ENCODE measurements at regions of chr18 and their contacts with region 1.

Region 1: DNA sequence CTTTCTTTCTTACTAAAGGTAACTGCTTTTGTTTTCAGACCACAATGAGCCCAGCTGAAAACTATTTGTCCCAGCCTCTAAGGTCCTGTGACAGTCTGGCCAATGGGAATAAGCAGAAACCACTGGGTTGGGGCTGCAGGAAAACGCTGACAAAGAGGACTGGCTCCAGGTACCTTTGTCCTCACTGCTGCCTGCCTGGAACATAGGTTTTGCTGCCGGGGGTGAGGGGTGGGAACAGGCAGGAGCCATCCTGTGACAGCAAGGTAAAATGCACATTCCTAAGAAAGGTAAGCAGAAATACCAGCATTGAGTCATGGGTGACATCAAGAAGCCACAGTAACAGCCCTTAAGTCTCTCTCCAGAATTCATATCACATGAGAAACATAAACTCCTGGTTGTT is 21.6 kb downstream of the PTPN2 start:
- DNase-seq: peak; percentile 37
- H3K4me3 ChIP-seq: peak overlapping the region; percentile 52
- H3K27ac ChIP-seq: peak overlapping the region; percentile 89
- H3K4me1 ChIP-seq: peaks cover 83% of the 10 kb centered on the region
- CTCF ChIP-seq: no peak

Region 2: DNA sequence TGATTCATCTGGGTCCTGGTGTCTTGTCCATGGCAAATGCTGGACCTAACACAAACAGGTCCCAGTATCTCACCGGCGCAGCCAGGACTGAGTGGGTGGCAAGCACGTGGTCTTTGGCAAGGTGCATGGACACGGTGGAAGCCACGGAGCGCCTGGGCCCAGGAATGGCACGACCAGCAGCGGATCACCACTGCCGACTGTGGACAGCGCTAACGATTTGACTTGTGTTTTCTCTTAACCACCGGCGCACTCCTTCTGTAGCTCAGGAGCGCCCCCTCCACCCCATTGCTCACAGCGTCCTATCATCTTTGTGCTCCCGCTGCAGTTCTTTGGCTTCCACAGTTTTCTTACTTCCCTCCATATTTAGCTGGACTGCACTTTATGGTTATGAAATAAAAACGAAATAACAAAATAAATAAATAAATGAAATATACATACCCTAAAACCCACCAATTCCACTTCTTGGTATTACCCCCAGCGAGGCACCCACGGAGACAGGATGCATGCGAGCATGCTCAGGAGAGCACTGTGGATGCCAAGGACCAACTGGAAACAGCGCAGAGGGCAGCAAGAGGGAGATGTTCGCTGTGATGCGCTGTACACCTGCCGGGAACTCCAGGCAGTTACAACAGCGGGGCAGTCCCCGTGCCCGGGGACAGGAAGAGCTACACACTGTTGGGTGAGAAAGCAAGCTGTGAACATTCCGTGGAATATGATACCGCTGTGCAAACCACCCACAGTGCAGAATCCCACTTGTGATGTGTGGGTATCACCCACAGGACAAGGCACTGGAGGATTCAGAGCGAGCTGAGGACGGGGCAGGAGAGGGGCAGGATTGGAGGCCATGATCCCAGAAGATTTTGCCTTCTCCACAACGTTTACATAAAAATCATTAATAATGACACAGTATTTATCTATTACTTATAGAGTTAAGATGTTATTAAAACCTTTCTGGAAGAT is 615.3 kb before region 1 on chr18:
- CTCF ChIA-PET with region 1: no interaction called
- POLR2A ChIA-PET with region 1: no interaction called
- intact Hi-C with region 1: no loop called
- DNase-seq: no peak
- H3K4me3 ChIP-seq: no peak overlapping the region
- H3K27ac ChIP-seq: no peak overlapping the region
- H3K4me1 ChIP-seq: no peaks in the 10 kb centered on the region
- CTCF ChIP-seq: peak; percentile 49

Region 3: DNA sequence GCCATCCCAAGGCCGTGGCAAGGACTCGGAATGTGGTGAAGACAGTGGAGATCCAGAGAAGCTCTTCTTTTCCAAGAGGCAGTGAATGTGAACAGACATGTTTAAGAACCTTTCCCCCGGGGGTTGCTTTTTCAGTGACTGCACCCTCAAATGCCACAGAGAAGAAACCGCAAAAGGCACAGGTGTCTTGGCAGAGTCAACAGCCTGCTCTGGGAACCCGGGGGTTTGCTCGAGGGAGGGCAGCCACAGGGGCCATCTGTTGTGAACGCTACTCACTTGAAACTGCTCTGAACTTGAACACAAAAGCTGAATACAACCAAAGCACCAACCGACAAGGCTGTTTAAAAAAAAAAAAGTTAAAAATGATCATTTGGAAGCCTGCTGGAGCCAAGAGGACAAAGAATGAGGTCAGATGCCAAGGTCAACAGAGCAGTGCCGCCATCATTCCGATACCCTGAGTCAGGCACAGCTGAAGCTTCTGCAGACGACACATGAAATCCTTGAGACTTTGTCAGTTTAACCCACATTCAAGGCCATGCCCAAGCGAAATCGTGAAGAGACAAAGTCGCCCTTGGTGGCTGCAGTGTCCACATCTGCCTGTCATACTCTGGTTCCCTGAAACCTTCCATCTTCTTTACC is 112.3 kb before region 1 on chr18:
- CTCF ChIA-PET with region 1: no interaction called
- POLR2A ChIA-PET with region 1: no interaction called
- intact Hi-C with region 1: loop called (anchors 1 kb)
- DNase-seq: peak; percentile 95
- H3K4me3 ChIP-seq: peak overlapping the region; percentile 15
- H3K27ac ChIP-seq: peak overlapping the region; percentile 62
- H3K4me1 ChIP-seq: peaks cover 40% of the 10 kb centered on the region
- CTCF ChIP-seq: no peak

Region 4: DNA sequence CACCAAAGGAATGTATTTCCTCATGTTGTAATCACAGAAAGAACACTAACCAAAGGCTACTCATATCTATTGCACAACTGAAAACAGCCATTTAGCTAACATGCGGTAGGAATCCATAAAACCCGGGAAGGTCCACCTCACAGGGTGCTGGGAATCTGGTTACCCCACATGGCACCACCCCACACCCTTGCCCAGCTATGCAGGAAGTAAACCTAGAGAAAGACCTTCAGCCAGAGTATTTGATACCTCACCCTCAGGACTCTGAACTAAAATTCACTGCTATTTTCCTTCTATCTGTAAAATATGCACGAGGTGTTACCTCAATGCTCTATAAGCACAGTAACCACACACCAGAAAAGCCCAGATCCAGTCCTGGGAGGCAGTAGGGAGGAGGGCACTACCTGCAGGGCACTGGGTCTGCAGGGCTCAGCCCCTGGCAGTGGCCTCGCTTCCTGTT is 24.3 kb before region 1 on chr18:
- CTCF ChIA-PET with region 1: no interaction called
- POLR2A ChIA-PET with region 1: interaction called, 3 read pairs
- intact Hi-C with region 1: loop called (anchors 1 kb)
- DNase-seq: peak; percentile 31
- H3K4me3 ChIP-seq: peak overlapping the region; percentile 46
- H3K27ac ChIP-seq: peak overlapping the region; percentile 18
- H3K4me1 ChIP-seq: peaks cover 39% of the 10 kb centered on the region
- CTCF ChIP-seq: no peak

Region 5: DNA sequence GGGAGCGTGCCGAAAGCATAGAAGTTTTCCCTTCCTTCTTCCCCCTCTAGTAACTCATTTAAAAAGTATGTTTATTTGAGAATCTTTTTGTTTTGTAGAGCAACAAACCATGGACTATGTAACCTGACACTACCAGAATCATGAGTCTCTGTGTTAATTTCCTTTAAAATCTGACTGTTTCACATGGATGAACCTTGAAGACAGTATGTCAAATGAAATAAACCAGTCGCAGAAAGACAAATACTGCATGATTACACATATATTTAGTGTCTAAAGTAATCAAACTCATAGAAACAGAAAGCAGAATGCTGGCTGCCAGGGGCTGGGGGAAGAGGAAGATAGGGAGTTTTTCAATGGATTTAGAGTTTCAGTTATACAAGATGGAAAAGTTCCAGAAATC is 10.8 kb before region 1 on chr18:
- CTCF ChIA-PET with region 1: no interaction called
- POLR2A ChIA-PET with region 1: interaction called, 11 read pairs
- intact Hi-C with region 1: no loop called
- DNase-seq: no peak
- H3K4me3 ChIP-seq: no peak overlapping the region
- H3K27ac ChIP-seq: no peak overlapping the region
- H3K4me1 ChIP-seq: peaks cover 34% of the 10 kb centered on the region
- CTCF ChIP-seq: no peak

Region 6: GRCh38 chr18:12883684-12884405 is 21.4 kb after region 1 on chr18 and contains the start of gene PTPN2:
- CTCF ChIA-PET with region 1: interaction called, 3 read pairs
- POLR2A ChIA-PET with region 1: interaction called, 52 read pairs
- intact Hi-C with region 1: loop called (anchors 2 kb)
- DNase-seq: peak; percentile 95
- H3K4me3 ChIP-seq: peak within 1 kb of the TSS; percentile 78
- H3K27ac ChIP-seq: peak within 1 kb of the TSS; percentile 86
- H3K4me1 ChIP-seq: peaks cover 61% of the 10 kb centered on the region
- CTCF ChIP-seq: no peak
- total RNA-seq, gene PTPN2: 69.7 and 85.0 TPM in 2 replicates

Region 7: GRCh38 chr18:13051950-13052349 is 189.5 kb after region 1 on chr18:
- CTCF ChIA-PET with region 1: no interaction called
- POLR2A ChIA-PET with region 1: no interaction called
- intact Hi-C with region 1: no loop called
- DNase-seq: peak; percentile 75
- H3K4me3 ChIP-seq: no peak overlapping the region
- H3K27ac ChIP-seq: peak overlapping the region; percentile 33
- H3K4me1 ChIP-seq: peaks cover 15% of the 10 kb centered on the region
- CTCF ChIP-seq: no peak

Measured in OCI-LY7 (cell line).